PC-9 (cell line): ENCODE measurements at regions of chr10 and their contacts with region 1.

Region 1: GRCh38 chr10:14674376-14675050 is 100.2 kb downstream of the FAM107B start:
- DNase-seq: no peak
- H3K4me3 ChIP-seq: no peak overlapping the region
- H3K27ac ChIP-seq: no peak overlapping the region
- H3K4me1 ChIP-seq: peaks cover 18% of the 10 kb centered on the region
- H3K27me3 ChIP-seq: no peaks in the 10 kb centered on the region
- CTCF ChIP-seq: no peak

Region 2: DNA sequence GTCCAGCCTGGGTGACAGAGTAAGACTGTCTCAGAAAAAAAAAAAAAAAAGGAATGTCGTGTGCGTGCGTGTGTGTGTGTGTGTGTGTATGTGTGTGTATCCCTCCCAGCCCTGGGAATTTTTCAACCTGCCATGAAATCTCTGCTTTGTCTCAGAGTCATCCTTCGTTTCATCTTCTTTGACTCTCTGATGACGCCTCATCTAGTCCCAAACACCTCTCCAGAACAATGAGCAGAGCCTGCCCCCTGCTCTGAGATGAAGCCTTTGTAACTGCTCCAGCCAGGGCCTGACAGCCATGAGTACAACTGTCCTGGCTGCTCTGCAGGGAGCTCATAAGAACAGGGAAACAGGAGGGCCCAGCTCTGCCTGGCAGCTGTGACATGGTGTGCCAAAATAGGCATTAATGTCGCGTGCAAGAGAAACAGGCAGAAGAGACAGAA is 49.3 kb before region 1 on chr10:
- CTCF ChIA-PET with region 1: no interaction called
- POLR2A ChIA-PET with region 1: interaction called, 11 read pairs
- intact Hi-C with region 1: no loop called
- DNase-seq: no peak
- H3K4me3 ChIP-seq: no peak overlapping the region
- H3K27ac ChIP-seq: no peak overlapping the region
- H3K4me1 ChIP-seq: no peaks in the 10 kb centered on the region
- H3K27me3 ChIP-seq: no peaks in the 10 kb centered on the region
- CTCF ChIP-seq: no peak

Region 3: GRCh38 chr10:14648005-14648765 is 26.3 kb before region 1 on chr10:
- CTCF ChIA-PET with region 1: no interaction called
- POLR2A ChIA-PET with region 1: no interaction called
- intact Hi-C with region 1: no loop called
- DNase-seq: peak in 1 of 2 experiments; percentile 56
- H3K4me3 ChIP-seq: no peak overlapping the region
- H3K27ac ChIP-seq: no peak overlapping the region
- H3K4me1 ChIP-seq: peaks cover 23% of the 10 kb centered on the region
- H3K27me3 ChIP-seq: no peaks in the 10 kb centered on the region
- CTCF ChIP-seq: no peak

Region 4: DNA sequence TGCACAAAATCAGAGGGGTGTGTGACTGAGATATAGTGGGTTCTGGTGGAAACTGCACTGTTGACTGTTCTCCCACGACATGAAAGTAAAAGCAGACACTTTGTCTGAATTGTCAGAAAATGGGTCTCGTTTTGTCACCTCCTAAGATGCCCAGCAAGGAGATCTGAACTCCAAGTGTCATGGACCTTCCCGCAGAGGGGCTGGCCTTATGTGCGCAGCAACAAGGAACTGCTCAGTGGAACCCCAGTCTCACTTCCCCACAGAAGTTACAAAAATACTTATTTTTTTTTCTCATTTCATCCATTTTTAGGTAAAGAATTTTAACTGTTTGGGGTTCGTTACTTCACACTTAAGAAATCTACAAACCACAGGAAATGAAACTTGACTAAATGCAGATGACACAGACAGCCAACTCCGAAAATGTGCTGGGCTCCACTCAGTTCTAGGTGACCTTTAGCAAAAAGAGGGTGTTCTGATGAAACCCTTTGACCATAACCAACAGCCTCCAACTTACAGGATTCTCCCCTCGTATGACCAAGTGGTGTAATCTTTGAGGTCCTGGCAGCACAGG is 14.8 kb before region 1 on chr10:
- CTCF ChIA-PET with region 1: no interaction called
- POLR2A ChIA-PET with region 1: no interaction called
- intact Hi-C with region 1: no loop called
- DNase-seq: no peak
- H3K4me3 ChIP-seq: no peak overlapping the region
- H3K27ac ChIP-seq: peak overlapping the region; percentile 86
- H3K4me1 ChIP-seq: peaks cover 55% of the 10 kb centered on the region
- H3K27me3 ChIP-seq: no peaks in the 10 kb centered on the region
- CTCF ChIP-seq: no peak